ENCODE measurements at regions of chrX and their contacts with region 1.

Region 1: GRCh38 chrX:155544881-155545280 is 67.9 kb downstream of the TMLHE start:
- DNase-seq: no peak
- ATAC-seq: no peak
- H3K4me3 ChIP-seq: no peak overlapping the region
- H3K27ac ChIP-seq: no peak overlapping the region
- H3K4me1 ChIP-seq: no peaks in the 10 kb centered on the region
- H3K27me3 ChIP-seq: no peaks in the 10 kb centered on the region
- CTCF ChIP-seq: no peak
- EP300 ChIP-seq: no peak
- POLR2A ChIP-seq: no peak
- RAD21 ChIP-seq: no peak

Region 2: GRCh38 chrX:155592981-155593380 is 48.1 kb after region 1 on chrX:
- CTCF ChIA-PET with region 1: no interaction called
- POLR2A ChIA-PET with region 1: no interaction called
- in situ Hi-C with region 1: loop called (anchors 5 kb)
- intact Hi-C with region 1: no loop called
- DNase-seq: no peak
- ATAC-seq: no peak
- H3K4me3 ChIP-seq: no peak overlapping the region
- H3K27ac ChIP-seq: no peak overlapping the region
- H3K4me1 ChIP-seq: no peaks in the 10 kb centered on the region
- H3K27me3 ChIP-seq: no peaks in the 10 kb centered on the region
- CTCF ChIP-seq: no peak
- EP300 ChIP-seq: no peak
- POLR2A ChIP-seq: no peak
- RAD21 ChIP-seq: no peak

Measured in K562 (cell line).